ENCODE measurements at regions of chr7 and their contacts with region 1.

Region 1: GRCh38 chr7:49483142-49483541 is 290.3 kb upstream of the VWC2 start:
- DNase-seq: peak in 1 of 3 donors; percentile 33
- ATAC-seq: peak; percentile 47 to 66
- H3K4me3 ChIP-seq: no peak overlapping the region
- H3K27ac ChIP-seq: no peak overlapping the region
- H3K4me1 ChIP-seq: no peaks in the 10 kb centered on the region
- H3K27me3 ChIP-seq: no peaks in the 10 kb centered on the region

Region 2: DNA sequence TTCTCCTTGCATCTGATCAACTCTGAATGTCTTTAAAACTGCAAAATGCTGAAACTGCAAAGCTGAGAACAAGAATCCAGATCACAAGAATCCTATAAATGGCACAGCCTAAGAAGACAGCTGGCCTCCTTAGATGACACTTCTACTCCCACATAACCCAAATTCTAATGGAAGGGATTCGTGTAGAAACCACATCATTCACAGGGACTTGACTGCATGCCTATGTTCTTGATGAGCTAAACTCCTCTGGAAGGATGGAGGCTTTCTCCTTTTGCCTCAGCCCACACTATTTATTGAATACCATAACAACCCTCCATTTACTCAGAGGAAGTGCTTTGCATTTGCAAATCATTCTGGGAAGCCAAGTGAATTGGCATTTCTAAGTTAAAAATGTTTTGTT is 37.8 kb after region 1 on chr7:
- intact Hi-C with region 1: no loop called
- DNase-seq: no peak
- ATAC-seq: no peak
- H3K4me3 ChIP-seq: no peak overlapping the region
- H3K27ac ChIP-seq: no peak overlapping the region
- H3K4me1 ChIP-seq: no peaks in the 10 kb centered on the region
- H3K27me3 ChIP-seq: no peaks in the 10 kb centered on the region

Region 3: GRCh38 chr7:49776994-49777393 is 293.9 kb after region 1 on chr7:
- intact Hi-C with region 1: loop called in 1 of 4 experiments (anchors 10 kb)
- DNase-seq: no peak
- ATAC-seq: no peak
- H3K4me3 ChIP-seq: no peak overlapping the region
- H3K27ac ChIP-seq: no peak overlapping the region
- H3K4me1 ChIP-seq: no peaks in the 10 kb centered on the region
- H3K27me3 ChIP-seq: no peaks in the 10 kb centered on the region

Region 4: DNA sequence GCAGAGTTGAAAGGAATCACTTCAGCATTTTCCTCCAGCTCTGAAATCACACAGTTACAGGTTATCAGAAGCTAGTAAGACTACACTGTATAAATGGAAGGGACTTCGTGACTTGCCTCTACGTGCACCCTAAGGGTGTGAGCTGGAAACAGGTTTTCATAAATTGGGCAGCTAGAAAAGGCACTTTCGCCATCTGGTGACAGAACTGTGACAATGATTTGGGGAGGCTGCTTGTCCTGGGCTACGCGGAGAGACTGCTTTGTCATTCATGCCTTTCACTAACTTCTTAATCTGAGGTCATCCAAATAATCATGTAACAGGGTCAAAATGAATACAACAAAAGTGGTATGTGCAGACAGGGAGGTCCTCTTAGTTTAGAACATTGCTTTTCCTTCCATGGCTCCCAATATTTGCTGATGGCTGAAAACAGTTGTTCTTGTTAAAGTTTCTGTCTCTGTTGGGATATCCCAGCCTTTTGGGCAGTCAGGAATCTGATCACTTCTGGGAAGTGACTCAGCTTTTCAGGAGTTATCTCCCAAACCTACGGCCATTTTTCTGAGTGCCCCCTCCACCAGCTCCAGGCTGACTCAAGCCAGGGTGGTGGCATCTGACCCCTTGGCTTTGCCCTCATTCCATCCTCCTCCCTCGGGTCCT is 308.1 kb after region 1 on chr7:
- intact Hi-C with region 1: loop called in 2 of 4 experiments (anchors 5 to 10 kb)
- DNase-seq: no peak
- ATAC-seq: peak; percentile 70 to 80
- H3K4me3 ChIP-seq: no peak overlapping the region
- H3K27ac ChIP-seq: no peak overlapping the region
- H3K4me1 ChIP-seq: peaks cover 5% of the 10 kb centered on the region
- H3K27me3 ChIP-seq: no peaks in the 10 kb centered on the region

Region 5: GRCh38 chr7:49848211-49848841 is 365.2 kb after region 1 on chr7:
- intact Hi-C with region 1: loop called in 1 of 4 experiments (anchors 10 kb)
- DNase-seq: peak in 1 of 3 donors; percentile 39
- ATAC-seq: no peak
- H3K4me3 ChIP-seq: no peak overlapping the region
- H3K27ac ChIP-seq: no peak overlapping the region
- H3K4me1 ChIP-seq: peaks cover 6% of the 10 kb centered on the region
- H3K27me3 ChIP-seq: no peaks in the 10 kb centered on the region